Aorta (tissue), 5 donors: ENCODE measurements at regions of chrX and their contacts with region 1.

Region 1: DNA sequence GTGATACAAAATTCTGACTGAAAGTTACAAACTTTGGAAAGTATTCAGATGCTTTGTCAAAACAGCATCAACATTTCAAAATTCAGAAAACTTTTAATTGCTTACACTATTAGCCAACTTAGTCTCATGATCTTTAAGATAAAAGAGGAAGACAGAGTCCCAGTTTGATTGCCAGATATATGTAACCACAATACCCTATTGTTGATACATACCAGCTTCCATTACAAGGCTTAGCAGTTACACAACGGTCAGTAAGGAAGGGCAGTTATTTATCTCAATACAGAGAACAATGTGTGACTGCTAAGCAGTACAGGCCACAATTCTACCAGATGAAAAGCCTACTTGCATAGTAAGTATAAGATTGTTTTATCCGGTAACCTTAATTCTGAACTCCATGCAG is 138.4 kb downstream of the SPANXN3 start:
- DNase-seq: no peak
- ATAC-seq: no peak
- H3K4me3 ChIP-seq: no peak overlapping the region
- H3K27ac ChIP-seq: no peak overlapping the region
- H3K4me1 ChIP-seq: no peaks in the 10 kb centered on the region
- H3K27me3 ChIP-seq: no peaks in the 10 kb centered on the region

Region 2: DNA sequence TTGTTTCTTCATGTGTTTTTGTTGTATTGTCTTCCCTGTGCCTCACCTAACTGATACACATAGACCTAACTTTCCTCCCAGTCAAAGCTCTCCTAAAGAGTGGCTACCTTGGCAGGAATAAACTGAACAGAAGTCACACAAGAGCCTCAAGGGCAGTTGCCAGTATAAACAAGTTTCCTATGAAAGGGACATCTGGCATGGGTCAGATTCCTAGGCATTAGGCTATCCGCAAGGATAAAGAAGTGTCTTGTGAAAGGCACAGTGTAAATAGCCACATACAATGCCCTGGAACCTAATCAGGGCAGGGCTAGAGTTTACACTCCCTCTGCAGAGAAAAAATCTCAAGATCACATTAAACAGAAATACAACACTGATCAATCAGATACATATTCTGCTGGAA is 82.3 kb before region 1 on chrX:
- intact Hi-C with region 1: no loop called
- DNase-seq: no peak
- ATAC-seq: no peak
- H3K4me3 ChIP-seq: no peak overlapping the region
- H3K27ac ChIP-seq: no peak overlapping the region
- H3K4me1 ChIP-seq: no peaks in the 10 kb centered on the region
- H3K27me3 ChIP-seq: no peaks in the 10 kb centered on the region

Region 3: DNA sequence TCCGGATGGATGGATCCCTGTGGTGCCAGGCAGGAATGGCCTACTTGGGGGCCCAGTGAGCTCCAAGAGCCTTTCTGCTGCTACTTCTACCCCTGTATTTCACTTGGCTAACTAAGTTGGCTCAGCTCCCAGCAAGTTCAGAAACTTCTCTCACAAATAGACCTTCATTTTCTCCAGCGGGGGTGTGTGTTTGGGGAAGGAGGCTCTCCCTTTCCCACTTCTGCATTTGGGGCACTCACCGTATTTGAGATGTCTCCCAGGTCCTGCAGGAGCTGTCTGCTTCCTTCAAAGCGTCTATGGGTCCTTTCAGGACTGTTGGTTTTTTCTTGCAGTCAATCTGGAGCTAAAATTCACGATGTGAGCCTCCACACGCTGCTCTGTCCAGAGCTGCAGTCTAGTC is 59.3 kb before region 1 on chrX:
- intact Hi-C with region 1: no loop called
- DNase-seq: no peak
- ATAC-seq: no peak
- H3K4me3 ChIP-seq: no peak overlapping the region
- H3K27ac ChIP-seq: no peak overlapping the region
- H3K4me1 ChIP-seq: no peaks in the 10 kb centered on the region
- H3K27me3 ChIP-seq: no peaks in the 10 kb centered on the region

Region 4: GRCh38 chrX:143401160-143401559 is 22.3 kb after region 1 on chrX:
- intact Hi-C with region 1: loop called in 1 of 2 experiments (anchors 1 kb)
- DNase-seq: no peak
- ATAC-seq: no peak
- H3K4me3 ChIP-seq: no peak overlapping the region
- H3K27ac ChIP-seq: no peak overlapping the region
- H3K4me1 ChIP-seq: no peaks in the 10 kb centered on the region
- H3K27me3 ChIP-seq: no peaks in the 10 kb centered on the region